ENCODE measurements at regions of chr17 and their contacts with region 1.

Region 1: GRCh38 chr17:30278032-30278431 is 13.7 kb downstream of the BLMH start:
- DNase-seq: no peak
- ATAC-seq: peak in 1 of 2 donors; percentile 51
- H3K4me3 ChIP-seq: no peak overlapping the region
- H3K27ac ChIP-seq: no peak overlapping the region
- H3K4me1 ChIP-seq: no peaks in the 10 kb centered on the region
- H3K27me3 ChIP-seq: no peaks in the 10 kb centered on the region
- CTCF ChIP-seq: peak in 3 of 5 experiments; percentile 26 to 50 (median 42)
- POLR2A ChIP-seq: no peak

Region 2: GRCh38 chr17:30124273-30124796 is 153.7 kb before region 1 on chr17:
- in situ Hi-C with region 1: loop called in 3 of 4 experiments (anchors 5 to 25 kb)
- intact Hi-C with region 1: loop called (anchors 2 kb)
- DNase-seq: no peak
- ATAC-seq: no peak
- H3K4me3 ChIP-seq: no peak overlapping the region
- H3K27ac ChIP-seq: no peak overlapping the region
- H3K4me1 ChIP-seq: peaks cover 5 to 8% of the 10 kb centered on the region in 2 donors
- H3K27me3 ChIP-seq: no peaks in the 10 kb centered on the region
- CTCF ChIP-seq: no peak
- POLR2A ChIP-seq: no peak

Region 3: GRCh38 chr17:30134551-30134950 is 143.5 kb before region 1 on chr17:
- in situ Hi-C with region 1: loop called in 2 of 4 experiments (anchors 5 to 10 kb)
- intact Hi-C with region 1: no loop called
- DNase-seq: no peak
- ATAC-seq: no peak
- H3K4me3 ChIP-seq: no peak overlapping the region
- H3K27ac ChIP-seq: no peak overlapping the region
- H3K4me1 ChIP-seq: no peaks in the 10 kb centered on the region
- H3K27me3 ChIP-seq: no peaks in the 10 kb centered on the region
- CTCF ChIP-seq: no peak
- POLR2A ChIP-seq: no peak

Region 4: DNA sequence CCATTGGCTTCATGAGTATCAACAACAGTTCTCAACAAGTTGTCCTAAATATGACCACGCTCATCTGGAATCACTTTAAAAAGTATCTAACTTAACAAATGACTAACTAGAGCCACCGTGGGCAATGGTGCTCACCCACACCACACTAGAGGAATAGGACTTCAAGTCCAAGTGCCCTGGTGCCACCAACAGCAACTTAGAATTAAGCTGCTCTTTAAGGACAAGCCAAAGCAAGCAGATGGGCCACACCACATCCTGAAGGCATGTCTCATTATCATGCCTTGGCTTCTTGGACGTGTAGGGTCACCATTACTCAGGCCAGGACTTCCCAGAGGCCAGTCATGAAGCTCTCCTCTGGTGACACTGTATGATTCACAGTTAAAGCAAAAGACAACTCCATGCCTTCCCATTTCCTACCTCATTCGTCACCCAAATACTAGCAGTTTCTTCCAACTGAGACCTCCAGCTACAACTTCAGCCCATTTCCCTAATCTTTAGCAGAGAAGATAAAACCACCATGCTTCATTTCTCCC is 33.1 kb before region 1 on chr17:
- in situ Hi-C with region 1: no loop called
- intact Hi-C with region 1: no loop called
- DNase-seq: no peak
- ATAC-seq: no peak
- H3K4me3 ChIP-seq: no peak overlapping the region
- H3K27ac ChIP-seq: no peak overlapping the region
- H3K4me1 ChIP-seq: peaks cover 0 to 7% of the 10 kb centered on the region in 2 donors
- H3K27me3 ChIP-seq: peaks cover under 1 to 4% (median 1%) of the 10 kb centered on the region in 3 donors
- CTCF ChIP-seq: no peak
- POLR2A ChIP-seq: no peak

Region 5: GRCh38 chr17:30413109-30413508 is 135.1 kb after region 1 on chr17:
- in situ Hi-C with region 1: no loop called
- intact Hi-C with region 1: no loop called
- DNase-seq: no peak
- ATAC-seq: no peak
- H3K4me3 ChIP-seq: no peak overlapping the region
- H3K27ac ChIP-seq: no peak overlapping the region
- H3K4me1 ChIP-seq: no peaks in the 10 kb centered on the region
- H3K27me3 ChIP-seq: no peaks in the 10 kb centered on the region
- CTCF ChIP-seq: no peak
- POLR2A ChIP-seq: no peak

Measured in gastrocnemius medialis (tissue), 4 donors.